ENCODE measurements at regions of chr16 and their contacts with region 1.

Region 1: DNA sequence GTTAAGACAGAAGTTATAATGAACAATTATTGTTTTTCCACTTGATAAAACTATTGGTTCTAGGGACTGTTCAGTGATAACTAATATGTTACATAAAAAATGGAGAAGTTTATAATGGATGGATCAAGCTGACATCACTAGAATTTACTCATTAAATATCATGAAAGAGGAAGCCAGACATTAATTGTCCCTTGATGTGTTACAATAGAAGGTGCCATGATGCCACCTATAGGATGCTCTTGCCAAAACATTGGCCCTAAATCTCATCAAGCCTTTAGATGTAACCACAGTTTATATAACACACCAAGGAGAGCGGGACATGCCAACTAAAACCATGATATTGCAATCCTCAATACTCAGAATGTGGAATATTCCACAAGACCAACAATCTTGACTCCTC is 147.9 kb upstream of the MON1B start:
- DNase-seq: peak; percentile 1
- H3K4me3 ChIP-seq: no peak overlapping the region
- H3K27ac ChIP-seq: no peak overlapping the region
- H3K4me1 ChIP-seq: no peaks in the 10 kb centered on the region
- H3K27me3 ChIP-seq: no peaks in the 10 kb centered on the region
- CTCF ChIP-seq: peak; percentile 31 to 60

Region 2: DNA sequence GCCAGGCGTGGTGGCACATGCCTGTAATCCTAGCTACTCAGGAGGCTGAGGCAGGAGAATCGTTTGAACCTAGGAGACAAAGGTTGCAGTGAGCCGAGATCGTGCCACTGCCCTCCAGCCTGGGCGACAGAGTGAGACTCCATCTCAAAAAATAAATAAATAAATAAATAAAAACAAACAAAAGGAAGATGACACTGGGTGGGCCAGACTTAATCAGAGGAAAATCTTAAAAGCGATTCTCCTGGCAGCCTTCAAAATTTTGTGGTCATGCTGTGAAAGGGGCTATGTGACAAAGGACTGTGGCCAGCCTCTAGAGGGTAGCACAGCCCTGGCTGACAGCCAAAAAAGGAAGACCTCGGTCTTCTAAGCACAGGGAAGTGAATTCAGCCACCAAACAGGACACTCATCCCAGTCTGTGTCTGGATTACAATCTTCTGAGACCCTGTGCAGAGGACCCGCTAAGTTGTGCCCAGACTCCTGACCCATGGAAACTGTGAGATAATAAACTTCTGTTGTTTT is 374.8 kb before region 1 on chr16:
- CTCF ChIA-PET with region 1: no interaction called
- dilution Hi-C with region 1: no loop called
- in situ Hi-C with region 1: no loop called
- intact Hi-C with region 1: loop called (anchors 5 kb)
- DNase-seq: no peak
- H3K4me3 ChIP-seq: no peak overlapping the region
- H3K27ac ChIP-seq: no peak overlapping the region
- H3K4me1 ChIP-seq: no peaks in the 10 kb centered on the region
- H3K27me3 ChIP-seq: no peaks in the 10 kb centered on the region
- CTCF ChIP-seq: no peak

Region 3: GRCh38 chr16:76748461-76749348 is 294.4 kb before region 1 on chr16:
- CTCF ChIA-PET with region 1: no interaction called
- dilution Hi-C with region 1: no loop called
- in situ Hi-C with region 1: no loop called
- intact Hi-C with region 1: loop called (anchors 10 kb)
- DNase-seq: no peak
- H3K4me3 ChIP-seq: no peak overlapping the region
- H3K27ac ChIP-seq: no peak overlapping the region
- H3K4me1 ChIP-seq: no peaks in the 10 kb centered on the region
- H3K27me3 ChIP-seq: no peaks in the 10 kb centered on the region
- CTCF ChIP-seq: no peak

Region 4: DNA sequence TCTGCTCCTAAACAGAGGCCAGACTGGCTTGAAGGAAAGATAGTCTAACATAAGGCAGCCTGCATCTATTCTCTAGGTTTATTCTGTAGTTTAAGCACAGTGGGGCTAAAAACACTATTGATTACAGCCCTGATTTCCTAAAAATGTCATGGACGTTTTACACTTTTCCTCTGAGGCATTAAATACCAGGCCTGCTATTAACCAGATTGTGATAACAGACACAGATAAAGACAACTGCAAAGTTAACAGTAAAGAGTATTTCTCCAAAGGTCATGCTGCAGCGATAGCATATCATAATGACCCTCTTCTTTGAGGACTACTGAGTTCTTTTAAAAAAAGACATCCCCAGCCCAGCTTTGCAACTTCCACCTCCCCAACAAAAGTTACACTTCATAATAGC is 88.3 kb after region 1 on chr16:
- CTCF ChIA-PET with region 1: no interaction called
- dilution Hi-C with region 1: no loop called
- in situ Hi-C with region 1: no loop called
- intact Hi-C with region 1: no loop called
- DNase-seq: no peak
- H3K4me3 ChIP-seq: no peak overlapping the region
- H3K27ac ChIP-seq: no peak overlapping the region
- H3K4me1 ChIP-seq: no peaks in the 10 kb centered on the region
- H3K27me3 ChIP-seq: no peaks in the 10 kb centered on the region
- CTCF ChIP-seq: no peak

Measured in mammary epithelial cell (primary cell).